Activated CD4-positive, alpha-beta T cell treated with anti-CD3 and anti-CD28 coated beads, Interleukin-2, amount 10 ng/mL, durations not matched to agents 24 days and 14 days (primary cell): ENCODE measurements at regions of chr4 and their contacts with region 1.

Region 1: GRCh38 chr4:110088670-110089069 is 109.7 kb downstream of the ELOVL6 start:
- DNase-seq: peak; percentile 84
- H3K4me3 Mint-ChIP-seq: peak overlapping the region; percentile 77
- H3K27ac Mint-ChIP-seq: peak overlapping the region; percentile 91
- H3K4me1 Mint-ChIP-seq: peaks cover 55% of the 10 kb centered on the region
- H3K27me3 Mint-ChIP-seq: no peaks in the 10 kb centered on the region

Region 2: DNA sequence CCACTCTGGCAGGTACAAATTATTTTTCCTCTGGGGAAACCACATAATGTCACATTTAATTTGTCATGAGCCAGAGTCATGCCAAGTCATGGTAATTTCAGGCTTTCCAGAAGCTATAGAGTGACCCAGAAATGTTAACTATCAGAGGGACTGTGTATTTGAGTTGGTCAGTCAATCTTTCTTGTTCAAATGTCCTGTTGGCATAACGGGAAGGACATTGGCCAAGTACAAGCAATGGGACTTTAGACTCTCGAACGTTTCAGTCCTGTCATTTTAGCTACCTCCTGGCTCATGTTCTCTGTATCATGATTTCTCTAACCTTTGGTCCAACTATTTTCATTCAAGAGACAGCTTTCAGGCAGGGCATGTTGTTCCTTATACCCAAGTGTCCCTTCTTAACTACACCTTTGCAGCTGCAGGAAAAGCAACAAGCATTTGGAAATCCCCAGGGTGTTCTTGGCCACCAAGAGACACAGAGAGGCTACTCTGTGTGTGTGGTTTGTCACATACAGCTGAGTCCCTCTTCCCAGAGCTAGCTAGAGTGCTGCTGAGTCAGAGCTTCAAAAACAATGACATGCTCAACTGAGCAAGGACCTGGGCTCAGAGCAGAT is 33.4 kb before region 1 on chr4:
- intact Hi-C with region 1: loop called (anchors 1 kb)
- DNase-seq: peak; percentile 82
- H3K4me3 Mint-ChIP-seq: peak overlapping the region; percentile 67
- H3K27ac Mint-ChIP-seq: peak overlapping the region; percentile 74
- H3K4me1 Mint-ChIP-seq: peaks cover 62% of the 10 kb centered on the region
- H3K27me3 Mint-ChIP-seq: no peaks in the 10 kb centered on the region

Region 3: DNA sequence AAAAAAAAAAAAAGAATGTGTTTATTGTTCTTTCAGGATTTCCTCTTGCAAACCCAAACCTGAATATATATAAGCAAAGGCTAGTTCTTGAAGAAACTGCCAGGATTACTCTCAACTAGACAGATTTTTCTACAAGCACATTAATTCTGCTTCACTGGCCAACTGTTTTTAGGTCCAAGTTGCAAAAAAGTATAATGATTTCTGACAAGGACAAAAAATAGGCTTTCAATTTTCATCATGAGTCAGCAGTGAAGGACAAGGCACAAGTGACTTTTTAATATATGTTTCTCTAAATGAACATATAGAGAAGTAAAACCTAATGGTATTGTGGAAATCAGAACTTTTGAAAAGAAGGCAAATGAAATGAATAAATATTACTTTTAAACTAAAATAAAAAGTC is 36.0 kb after region 1 on chr4:
- intact Hi-C with region 1: loop called (anchors 2 kb)
- DNase-seq: no peak
- H3K4me3 Mint-ChIP-seq: no peak overlapping the region
- H3K27ac Mint-ChIP-seq: no peak overlapping the region
- H3K4me1 Mint-ChIP-seq: peaks cover 24% of the 10 kb centered on the region
- H3K27me3 Mint-ChIP-seq: no peaks in the 10 kb centered on the region

Region 4: GRCh38 chr4:110165382-110166285 is 77.0 kb after region 1 on chr4:
- intact Hi-C with region 1: loop called (anchors 1 kb)
- DNase-seq: peak; percentile 89
- H3K4me3 Mint-ChIP-seq: peak overlapping the region; percentile 62
- H3K27ac Mint-ChIP-seq: peak overlapping the region; percentile 98
- H3K4me1 Mint-ChIP-seq: peaks cover 24% of the 10 kb centered on the region
- H3K27me3 Mint-ChIP-seq: no peaks in the 10 kb centered on the region

Region 5: DNA sequence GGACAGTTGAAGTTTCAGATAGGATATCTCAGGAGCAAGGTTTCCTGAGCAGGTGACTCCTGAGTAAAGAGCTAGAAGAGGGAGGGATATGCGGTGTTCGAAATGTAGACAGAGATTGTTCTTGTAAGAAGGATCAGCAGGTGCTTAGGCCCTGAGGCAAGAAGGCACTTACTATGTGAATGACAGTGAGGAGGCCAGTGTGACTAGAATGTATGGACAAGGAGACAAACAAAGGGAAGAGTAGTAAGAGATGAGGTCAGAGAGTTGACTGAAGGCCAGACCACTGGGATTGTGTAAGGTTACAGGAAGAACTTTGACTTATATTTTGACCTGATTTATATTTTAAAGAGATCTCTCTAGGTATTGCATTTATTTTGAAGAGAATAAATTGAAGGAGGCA is 268.8 kb after region 1 on chr4:
- intact Hi-C with region 1: no loop called
- DNase-seq: no peak
- H3K4me3 Mint-ChIP-seq: no peak overlapping the region
- H3K27ac Mint-ChIP-seq: no peak overlapping the region
- H3K4me1 Mint-ChIP-seq: no peaks in the 10 kb centered on the region
- H3K27me3 Mint-ChIP-seq: peaks cover 10% of the 10 kb centered on the region

Region 6: DNA sequence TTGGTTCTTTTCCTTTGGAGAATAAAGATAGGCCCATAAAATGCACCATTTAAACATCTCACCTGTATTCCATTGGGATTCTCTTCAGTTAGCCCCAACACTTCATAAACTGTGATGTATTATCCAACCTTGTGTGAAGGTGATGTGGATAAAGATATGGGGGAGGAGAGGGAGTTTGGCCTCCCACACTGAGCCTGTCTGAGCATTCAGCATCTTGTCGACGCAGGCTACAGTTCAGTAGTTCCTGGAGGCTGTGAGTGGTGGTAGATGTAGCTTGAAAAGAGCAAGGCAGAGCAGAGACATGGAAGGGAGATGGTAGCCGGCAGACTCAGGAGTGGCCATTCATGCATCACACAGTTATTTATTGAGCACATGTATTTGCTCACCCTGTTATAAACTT is 826.6 kb after region 1 on chr4:
- intact Hi-C with region 1: no loop called
- DNase-seq: no peak
- H3K4me3 Mint-ChIP-seq: no peak overlapping the region
- H3K27ac Mint-ChIP-seq: no peak overlapping the region
- H3K4me1 Mint-ChIP-seq: no peaks in the 10 kb centered on the region
- H3K27me3 Mint-ChIP-seq: no peaks in the 10 kb centered on the region